CD4-positive, alpha-beta T cell (primary cell): ENCODE measurements at regions of chr3 and their contacts with region 1.

Region 1: GRCh38 chr3:105704726-105705410 is 163.9 kb downstream of the CBLB start:
- DNase-seq: no peak
- ATAC-seq: no peak
- H3K4me3 ChIP-seq: no peak overlapping the region
- H3K4me3 Mint-ChIP-seq: no peak overlapping the region
- H3K27ac ChIP-seq: no peak overlapping the region
- H3K27ac Mint-ChIP-seq: peak overlapping the region; percentile 1
- H3K4me1 ChIP-seq: no peaks in the 10 kb centered on the region
- H3K4me1 Mint-ChIP-seq: peaks cover 19% of the 10 kb centered on the region
- H3K27me3 ChIP-seq: no peaks in the 10 kb centered on the region
- H3K27me3 Mint-ChIP-seq: no peaks in the 10 kb centered on the region
- CTCF ChIP-seq: no peak

Region 2: DNA sequence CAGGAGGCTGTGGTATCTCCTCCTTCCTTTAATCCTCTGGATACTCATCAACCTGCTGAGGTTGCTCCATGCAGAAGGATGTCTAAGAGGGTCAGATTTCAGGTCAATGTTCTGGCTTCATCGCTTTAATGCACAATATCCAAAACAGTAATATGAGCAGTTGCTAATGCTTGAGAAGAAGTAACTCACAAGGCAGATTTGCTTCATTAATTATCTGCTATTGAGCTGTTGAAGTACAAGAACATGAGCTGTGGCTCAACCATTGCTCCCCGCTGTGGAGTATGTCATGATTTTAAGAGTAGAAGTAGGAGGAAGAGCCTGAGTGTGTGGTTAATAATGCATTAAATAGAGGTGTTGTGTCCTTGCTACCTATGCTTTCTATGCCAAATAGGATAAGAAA is 1751.1 kb before region 1 on chr3:
- CTCF ChIA-PET with region 1: no interaction called
- POLR2A ChIA-PET with region 1: no interaction called
- intact Hi-C with region 1: no loop called
- DNase-seq: no peak
- ATAC-seq: no peak
- H3K4me3 ChIP-seq: no peak overlapping the region
- H3K4me3 Mint-ChIP-seq: no peak overlapping the region
- H3K27ac ChIP-seq: no peak overlapping the region
- H3K27ac Mint-ChIP-seq: no peak overlapping the region
- H3K4me1 ChIP-seq: no peaks in the 10 kb centered on the region
- H3K4me1 Mint-ChIP-seq: no peaks in the 10 kb centered on the region
- H3K27me3 ChIP-seq: no peaks in the 10 kb centered on the region
- H3K27me3 Mint-ChIP-seq: no peaks in the 10 kb centered on the region
- CTCF ChIP-seq: no peak

Region 3: GRCh38 chr3:105722943-105723556 is 18.2 kb after region 1 on chr3:
- CTCF ChIA-PET with region 1: no interaction called
- POLR2A ChIA-PET with region 1: no interaction called
- intact Hi-C with region 1: loop called in 1 of 2 experiments (anchors 2 kb)
- DNase-seq: peak in 3 of 14 experiments; percentile 29 to 52 (median 34)
- ATAC-seq: peak; percentile 48
- H3K4me3 ChIP-seq: no peak overlapping the region
- H3K4me3 Mint-ChIP-seq: no peak overlapping the region
- H3K27ac ChIP-seq: no peak overlapping the region
- H3K27ac Mint-ChIP-seq: peak overlapping the region; percentile 19
- H3K4me1 ChIP-seq: no peaks in the 10 kb centered on the region
- H3K4me1 Mint-ChIP-seq: peaks cover 32% of the 10 kb centered on the region
- H3K27me3 ChIP-seq: no peaks in the 10 kb centered on the region
- H3K27me3 Mint-ChIP-seq: no peaks in the 10 kb centered on the region
- CTCF ChIP-seq: no peak

Region 4: DNA sequence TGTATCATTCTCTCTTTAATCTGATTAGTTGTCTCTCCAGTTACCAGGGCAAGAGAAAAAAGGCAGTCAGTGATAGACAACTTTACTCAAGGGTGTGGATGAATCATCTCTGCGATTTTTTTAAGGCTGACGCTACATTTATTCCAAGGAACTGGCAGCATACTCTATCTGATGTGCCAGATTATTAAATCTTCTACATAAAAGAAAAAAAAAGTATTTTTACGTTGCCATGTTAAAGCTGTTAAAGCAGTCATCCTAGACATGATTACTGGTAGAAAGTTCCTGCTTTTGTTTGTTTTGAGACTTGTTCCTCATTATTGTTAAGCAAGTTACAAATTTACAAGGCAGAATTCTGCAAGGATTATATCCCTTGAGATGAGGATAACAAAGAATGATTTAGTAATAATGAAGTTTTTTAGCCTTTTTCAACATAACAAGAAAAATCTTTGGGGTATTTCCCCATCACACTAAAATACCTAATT is 42.2 kb after region 1 on chr3:
- CTCF ChIA-PET with region 1: no interaction called
- POLR2A ChIA-PET with region 1: no interaction called
- intact Hi-C with region 1: loop called in 1 of 2 experiments (anchors 5 kb)
- DNase-seq: peak in 3 of 14 experiments; percentile 50 to 73 (median 60)
- ATAC-seq: peak; percentile 77
- H3K4me3 ChIP-seq: no peak overlapping the region
- H3K4me3 Mint-ChIP-seq: peak overlapping the region; percentile 49
- H3K27ac ChIP-seq: peak overlapping the region in 1 of 2 donors; percentile 35
- H3K27ac Mint-ChIP-seq: peak overlapping the region; percentile 94
- H3K4me1 ChIP-seq: peaks cover 26% of the 10 kb centered on the region
- H3K4me1 Mint-ChIP-seq: peaks cover 78% of the 10 kb centered on the region
- H3K27me3 ChIP-seq: no peaks in the 10 kb centered on the region
- H3K27me3 Mint-ChIP-seq: no peaks in the 10 kb centered on the region
- CTCF ChIP-seq: no peak